Endothelial cell of umbilical vein (primary cell): ENCODE measurements at regions of chr1 and their contacts with region 1.

Region 1: DNA sequence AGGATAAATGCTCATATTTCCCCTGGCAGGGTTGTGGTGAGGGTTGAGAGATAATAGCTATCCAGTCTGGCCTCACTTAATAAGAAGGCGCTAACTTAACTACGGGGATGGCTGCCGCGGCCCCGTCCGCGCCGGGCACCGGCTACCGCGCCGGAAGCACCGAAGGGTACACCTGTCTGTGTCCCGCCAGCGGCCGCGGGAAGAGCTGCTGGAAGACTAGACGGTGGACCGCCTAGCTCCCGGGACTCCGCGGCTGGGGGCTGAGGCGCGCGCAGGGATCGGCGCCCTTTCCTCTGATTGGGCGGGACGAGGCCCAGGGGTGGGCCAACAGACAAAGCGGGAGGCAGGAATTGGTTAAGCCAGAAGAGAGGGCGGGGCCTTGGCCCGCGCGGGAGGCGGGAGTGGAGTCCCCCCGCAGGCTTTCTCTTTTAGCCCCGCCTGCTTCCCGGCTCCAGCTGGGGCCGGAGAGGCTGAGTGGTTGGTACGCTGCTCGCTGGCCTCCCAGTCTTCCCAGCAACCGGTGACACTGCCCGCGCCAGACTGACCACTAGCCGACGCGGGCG is at the start of gene ZNF672:
- DNase-seq: peak; percentile 98
- H3K4me3 ChIP-seq: peak within 1 kb of the TSS; percentile 60 to 91 (median 83)
- H3K27ac ChIP-seq: peak within 1 kb of the TSS; percentile 83
- H3K4me1 ChIP-seq: peaks cover 14% of the 10 kb centered on the region
- H3K27me3 ChIP-seq: no peaks in the 10 kb centered on the region
- CTCF ChIP-seq: no peak
- POLR2A ChIP-seq: peak; percentile 68
- total RNA-seq, gene ZNF672: 20.1 and 21.5 TPM in 2 replicates

Region 2: GRCh38 chr1:248825909-248826760 is 11.7 kb before region 1 on chr1 and contains the start of gene SH3BP5L:
- CTCF ChIA-PET with region 1: interaction called, 33 read pairs
- POLR2A ChIA-PET with region 1: interaction called, 13 read pairs
- dilution Hi-C with region 1: no loop called
- intact Hi-C with region 1: loop called (anchors 1 kb)
- DNase-seq: peak; percentile 96
- H3K4me3 ChIP-seq: peak within 1 kb of the TSS; percentile 51 to 78 (median 73)
- H3K27ac ChIP-seq: peak within 1 kb of the TSS; percentile 89
- H3K4me1 ChIP-seq: peaks cover 45% of the 10 kb centered on the region
- H3K27me3 ChIP-seq: no peaks in the 10 kb centered on the region
- CTCF ChIP-seq: peak; percentile 62 to 69
- POLR2A ChIP-seq: peak; percentile 59
- total RNA-seq, gene SH3BP5L: 24.7 and 26.5 TPM in 2 replicates

Region 3: GRCh38 chr1:248858891-248859889 is 21.3 kb after region 1 on chr1 and contains the start of gene ZNF692:
- CTCF ChIA-PET with region 1: interaction called, 17 read pairs
- POLR2A ChIA-PET with region 1: interaction called, 14 read pairs
- dilution Hi-C with region 1: no loop called
- intact Hi-C with region 1: loop called (anchors 1 kb)
- DNase-seq: peak; percentile 96
- H3K4me3 ChIP-seq: peak within 1 kb of the TSS; percentile 18 to 68 (median 39)
- H3K27ac ChIP-seq: peak within 1 kb of the TSS; percentile 22
- H3K4me1 ChIP-seq: peaks cover 23% of the 10 kb centered on the region
- H3K27me3 ChIP-seq: peaks cover 2 to 4% of the 10 kb centered on the region in 2 experiments
- CTCF ChIP-seq: no peak
- POLR2A ChIP-seq: peak; percentile 98
- total RNA-seq, gene ZNF692: 36.6 and 38.6 TPM in 2 replicates

Region 4: GRCh38 chr1:248873409-248873992 is 35.6 kb after region 1 on chr1:
- CTCF ChIA-PET with region 1: interaction called, 4 read pairs
- POLR2A ChIA-PET with region 1: interaction called, 9 read pairs
- dilution Hi-C with region 1: no loop called
- intact Hi-C with region 1: loop called (anchors 1 kb)
- DNase-seq: peak; percentile 99
- H3K4me3 ChIP-seq: peak overlapping the region; percentile 49 to 81 (median 62)
- H3K27ac ChIP-seq: peak overlapping the region; percentile 76
- H3K4me1 ChIP-seq: no peaks in the 10 kb centered on the region
- H3K27me3 ChIP-seq: peaks cover 0 to 3% of the 10 kb centered on the region in 2 experiments
- CTCF ChIP-seq: peak in 1 of 2 donors; percentile 9
- POLR2A ChIP-seq: no peak